ENCODE measurements at regions of chr2 and their contacts with region 1.

Region 1: GRCh38 chr2:96856776-96857673 is 791 bp downstream of the ANKRD39 start:
- DNase-seq: peak; percentile 61
- H3K4me3 Mint-ChIP-seq: peak overlapping the region; percentile 90
- H3K27ac Mint-ChIP-seq: peak overlapping the region; percentile 88
- H3K4me1 Mint-ChIP-seq: peaks cover 49% of the 10 kb centered on the region
- H3K27me3 Mint-ChIP-seq: no peaks in the 10 kb centered on the region

Region 2: GRCh38 chr2:96842600-96842999 is 14.4 kb before region 1 on chr2:
- CTCF ChIA-PET with region 1: interaction called, 15 read pairs
- DNase-seq: no peak
- H3K4me3 Mint-ChIP-seq: no peak overlapping the region
- H3K27ac Mint-ChIP-seq: no peak overlapping the region
- H3K4me1 Mint-ChIP-seq: peaks cover 29% of the 10 kb centered on the region
- H3K27me3 Mint-ChIP-seq: no peaks in the 10 kb centered on the region

Region 3: GRCh38 chr2:96868555-96869280 is 11.7 kb after region 1 on chr2:
- CTCF ChIA-PET with region 1: interaction called, 30 read pairs
- DNase-seq: peak; percentile 83
- H3K4me3 Mint-ChIP-seq: peak overlapping the region; percentile 85
- H3K27ac Mint-ChIP-seq: peak overlapping the region; percentile 84
- H3K4me1 Mint-ChIP-seq: peaks cover 39% of the 10 kb centered on the region
- H3K27me3 Mint-ChIP-seq: peaks cover 41% of the 10 kb centered on the region

Region 4: DNA sequence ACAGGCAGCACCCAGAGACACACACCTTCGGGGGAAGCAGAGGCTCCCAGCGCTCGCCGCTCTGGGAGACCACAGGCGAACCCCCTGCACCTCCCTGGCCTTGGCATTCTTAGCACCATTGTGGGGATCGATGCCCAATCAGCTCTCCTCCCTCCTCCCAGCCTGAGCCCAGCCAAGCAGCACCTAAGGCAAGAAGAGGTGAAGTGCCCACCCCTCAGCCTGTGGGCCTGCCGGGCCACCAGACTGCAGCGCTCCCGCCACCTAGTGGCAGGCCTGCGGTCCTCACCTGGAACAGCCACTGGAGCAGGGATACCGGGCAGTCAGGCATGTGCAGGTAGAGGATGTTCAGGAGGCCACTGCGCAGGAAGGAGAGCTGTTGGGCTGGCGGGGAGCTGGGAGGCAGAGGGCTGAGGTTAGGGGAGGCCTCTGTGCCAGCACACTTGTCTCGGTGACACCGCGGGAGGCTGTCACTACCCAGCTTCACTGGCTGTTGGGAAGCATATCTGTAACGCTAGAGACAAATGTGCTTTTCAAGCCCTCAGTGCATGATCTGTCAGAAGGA is 94.1 kb after region 1 on chr2:
- CTCF ChIA-PET with region 1: interaction called, 158 read pairs
- DNase-seq: peak; percentile 87
- H3K4me3 Mint-ChIP-seq: no peak overlapping the region
- H3K27ac Mint-ChIP-seq: no peak overlapping the region
- H3K4me1 Mint-ChIP-seq: peaks cover 40% of the 10 kb centered on the region
- H3K27me3 Mint-ChIP-seq: peaks cover 53% of the 10 kb centered on the region

Region 5: GRCh38 chr2:96960153-96960961 is 103.3 kb after region 1 on chr2:
- CTCF ChIA-PET with region 1: interaction called, 158 read pairs
- DNase-seq: peak; percentile 91
- H3K4me3 Mint-ChIP-seq: peak overlapping the region; percentile 45
- H3K27ac Mint-ChIP-seq: peak overlapping the region; percentile 99
- H3K4me1 Mint-ChIP-seq: peaks cover 65% of the 10 kb centered on the region
- H3K27me3 Mint-ChIP-seq: peaks cover 8% of the 10 kb centered on the region